Mammary epithelial cell (primary cell): ENCODE measurements at regions of chr6 and their contacts with region 1.

Region 1: GRCh38 chr6:158686791-158687381 is 37.0 kb downstream of the SYTL3 start:
- DNase-seq: no peak
- H3K4me3 ChIP-seq: no peak overlapping the region
- H3K27ac ChIP-seq: no peak overlapping the region
- H3K4me1 ChIP-seq: no peaks in the 10 kb centered on the region
- H3K27me3 ChIP-seq: no peaks in the 10 kb centered on the region
- CTCF ChIP-seq: no peak

Region 2: DNA sequence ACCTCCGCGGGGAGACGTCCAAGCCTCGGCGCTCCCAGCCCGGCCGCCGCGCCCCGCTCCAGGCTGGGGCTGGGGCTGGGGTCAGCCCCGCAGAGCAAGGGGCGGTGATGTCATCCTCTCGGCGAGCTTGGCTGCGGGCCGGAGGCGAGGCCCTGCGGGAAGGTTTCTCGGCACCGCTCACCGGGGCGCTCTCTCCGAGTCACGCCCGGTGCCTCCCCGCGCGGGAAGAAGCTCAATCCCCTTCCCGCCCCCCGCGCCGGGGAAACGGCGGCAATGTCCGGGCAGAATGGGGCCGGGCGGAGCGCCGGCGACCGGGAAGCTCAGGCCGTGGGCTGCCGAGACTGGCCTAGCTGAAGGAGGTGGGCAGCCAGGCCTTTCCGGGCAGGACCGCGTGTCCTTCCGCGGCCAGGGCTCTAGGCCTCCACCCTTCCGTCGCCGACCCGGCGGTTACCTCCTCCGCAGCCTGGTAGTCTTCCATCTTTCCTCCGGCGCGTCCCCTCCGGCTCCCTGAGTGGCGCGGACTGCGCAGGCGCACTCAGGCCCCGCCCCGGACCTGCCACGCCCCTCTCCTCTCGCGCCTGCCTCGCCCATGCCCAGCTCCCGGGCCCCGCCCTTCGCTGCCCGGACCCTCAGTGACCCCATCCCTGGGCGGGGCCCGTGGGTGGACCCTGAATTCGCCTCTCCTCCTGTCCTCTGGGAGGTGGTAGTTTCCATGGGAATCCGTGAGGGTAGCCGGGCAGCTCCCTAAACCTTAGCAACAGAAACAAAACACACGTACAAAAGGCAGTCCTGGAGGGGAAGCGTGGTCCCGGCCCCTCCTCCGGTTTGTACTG is 42.4 kb before region 1 on chr6 and contains the start of gene DYNLT1:
- CTCF ChIA-PET with region 1: interaction called, 7 read pairs
- dilution Hi-C with region 1: no loop called
- in situ Hi-C with region 1: no loop called
- intact Hi-C with region 1: loop called (anchors 1 kb)
- DNase-seq: peak; percentile 97
- H3K4me3 ChIP-seq: peak within 1 kb of the TSS; percentile 59 to 98 (median 77)
- H3K27ac ChIP-seq: peak within 1 kb of the TSS; percentile 97
- H3K4me1 ChIP-seq: peaks cover 47% of the 10 kb centered on the region
- H3K27me3 ChIP-seq: no peaks in the 10 kb centered on the region
- CTCF ChIP-seq: no peak
- total RNA-seq, gene DYNLT1: 51.8 to 129 TPM

Region 3: DNA sequence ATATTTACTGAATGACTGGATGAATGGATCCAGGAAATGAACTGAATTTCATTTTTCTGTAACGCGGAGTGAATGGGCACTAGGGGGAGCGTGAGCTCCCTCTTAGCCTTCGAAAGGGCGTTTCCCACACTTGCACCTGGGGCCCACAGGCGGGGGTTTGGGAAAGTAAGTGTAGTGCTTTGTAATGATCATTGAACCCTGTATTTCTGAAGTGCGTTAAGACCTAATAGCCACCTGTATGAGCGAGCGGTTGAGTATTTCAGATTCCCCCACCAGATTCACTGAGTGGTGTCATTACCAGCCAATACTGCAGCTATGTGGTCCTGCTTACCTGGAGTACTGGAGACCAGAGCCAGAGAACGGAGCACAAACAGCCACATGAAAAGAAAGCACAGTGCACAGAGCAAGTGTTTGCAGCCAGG is 26.5 kb before region 1 on chr6:
- CTCF ChIA-PET with region 1: no interaction called
- dilution Hi-C with region 1: no loop called
- in situ Hi-C with region 1: no loop called
- intact Hi-C with region 1: loop called (anchors 1 kb)
- DNase-seq: no peak
- H3K4me3 ChIP-seq: no peak overlapping the region
- H3K27ac ChIP-seq: no peak overlapping the region
- H3K4me1 ChIP-seq: no peaks in the 10 kb centered on the region
- H3K27me3 ChIP-seq: no peaks in the 10 kb centered on the region
- CTCF ChIP-seq: peak; percentile 49 to 59

Region 4: DNA sequence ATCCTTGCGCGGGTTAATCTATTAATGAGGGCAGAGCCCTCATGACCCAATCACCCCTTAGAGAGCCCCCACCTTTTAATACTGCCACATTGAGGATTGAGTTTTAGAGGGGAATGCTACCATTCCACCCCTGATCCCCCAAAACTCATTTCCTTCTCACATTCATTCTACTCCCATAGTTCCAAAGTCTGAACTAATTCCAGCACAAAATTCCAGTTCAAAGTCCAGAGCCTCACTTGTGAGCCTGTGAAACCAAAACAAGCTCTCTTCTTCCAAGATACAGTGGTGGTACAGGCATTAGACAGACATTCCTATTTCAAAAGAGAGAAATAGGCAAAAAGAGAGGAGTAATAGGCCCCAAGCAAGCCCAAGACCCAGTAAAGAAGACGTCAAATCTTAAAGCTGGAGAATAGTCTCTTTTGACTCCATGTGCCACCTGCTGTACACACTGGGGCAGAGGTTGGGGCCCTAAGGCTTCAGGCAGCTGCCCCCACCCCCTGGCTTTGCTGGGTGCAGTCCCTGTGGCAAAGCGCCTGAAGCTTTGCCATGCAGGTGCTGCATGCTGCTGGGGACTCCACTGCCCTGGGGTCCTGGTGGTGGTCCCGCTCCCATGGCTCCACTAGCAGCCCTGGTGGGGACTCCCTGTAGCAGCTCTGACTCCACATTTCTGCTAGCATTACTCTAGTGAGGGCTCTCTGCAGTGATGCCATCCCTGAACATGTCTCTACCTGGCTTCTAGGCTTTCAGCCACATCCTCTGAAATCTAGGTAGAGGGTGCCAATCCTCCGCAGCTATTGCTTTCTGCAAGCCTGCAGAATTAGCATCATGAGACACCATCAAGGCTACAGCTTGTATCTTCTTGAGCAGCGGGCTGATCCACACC is 271.9 kb after region 1 on chr6:
- CTCF ChIA-PET with region 1: no interaction called
- dilution Hi-C with region 1: no loop called
- in situ Hi-C with region 1: no loop called
- intact Hi-C with region 1: no loop called
- DNase-seq: peak; percentile 31
- H3K4me3 ChIP-seq: no peak overlapping the region
- H3K27ac ChIP-seq: no peak overlapping the region
- H3K4me1 ChIP-seq: peaks cover 8% of the 10 kb centered on the region
- H3K27me3 ChIP-seq: no peaks in the 10 kb centered on the region
- CTCF ChIP-seq: peak in 1 of 2 donors; percentile 47